Caco-2 (cell line): ENCODE measurements at regions of chr4 and their contacts with region 1.

Region 1: DNA sequence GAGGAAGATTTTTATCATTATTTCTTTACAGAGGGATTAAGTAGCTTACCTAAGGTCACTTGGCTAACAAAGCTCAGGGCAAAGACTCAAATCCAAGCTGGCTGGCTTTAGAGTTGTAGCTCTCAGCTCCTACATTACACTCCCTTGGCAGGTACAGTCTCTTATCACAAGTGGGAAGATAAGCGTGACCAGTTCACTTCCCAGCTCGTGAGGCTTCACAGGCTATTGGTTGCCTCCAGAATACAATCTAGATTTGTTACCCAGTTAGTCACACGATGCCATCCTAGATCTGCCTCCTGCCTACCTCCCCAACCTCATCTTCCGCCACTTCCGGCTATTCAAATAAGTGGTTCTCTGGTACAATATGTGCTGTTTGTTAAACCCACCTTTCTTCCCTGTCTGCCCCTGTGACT is 3.7 kb downstream of the MMRN1 start:
- DNase-seq: peak; percentile 63 to 76
- H3K4me3 ChIP-seq: no peak overlapping the region
- H3K4me3 Mint-ChIP-seq: no peak overlapping the region
- H3K27ac Mint-ChIP-seq: no peak overlapping the region
- H3K4me1 ChIP-seq: peaks cover 8% of the 10 kb centered on the region
- H3K4me1 Mint-ChIP-seq: no peaks in the 10 kb centered on the region
- H3K27me3 ChIP-seq: no peaks in the 10 kb centered on the region; the same call in none of the 2 replicates
- H3K27me3 Mint-ChIP-seq: no peaks in the 10 kb centered on the region
- CTCF ChIP-seq: no peak

Region 2: GRCh38 chr4:89226665-89227574 is 671.4 kb before region 1 on chr4:
- CTCF ChIA-PET with region 1: no interaction called
- POLR2A ChIA-PET with region 1: no interaction called
- intact Hi-C with region 1: loop called (anchors 2 kb)
- DNase-seq: peak; percentile 77 to 78
- H3K4me3 ChIP-seq: no peak overlapping the region
- H3K4me3 Mint-ChIP-seq: no peak overlapping the region
- H3K27ac Mint-ChIP-seq: no peak overlapping the region
- H3K4me1 ChIP-seq: peaks cover 7% of the 10 kb centered on the region; the same call in 1 of the 2 replicates
- H3K4me1 Mint-ChIP-seq: no peaks in the 10 kb centered on the region
- H3K27me3 ChIP-seq: no peaks in the 10 kb centered on the region
- H3K27me3 Mint-ChIP-seq: no peaks in the 10 kb centered on the region
- CTCF ChIP-seq: peak; percentile 43 to 70

Region 3: GRCh38 chr4:89482248-89482647 is 416.1 kb before region 1 on chr4:
- CTCF ChIA-PET with region 1: no interaction called
- POLR2A ChIA-PET with region 1: no interaction called
- intact Hi-C with region 1: loop called (anchors 2 kb)
- DNase-seq: peak; percentile 40 to 43
- H3K4me3 ChIP-seq: no peak overlapping the region
- H3K4me3 Mint-ChIP-seq: no peak overlapping the region
- H3K27ac Mint-ChIP-seq: no peak overlapping the region
- H3K4me1 ChIP-seq: no peaks in the 10 kb centered on the region
- H3K4me1 Mint-ChIP-seq: no peaks in the 10 kb centered on the region
- H3K27me3 ChIP-seq: no peaks in the 10 kb centered on the region
- H3K27me3 Mint-ChIP-seq: peaks cover 3% of the 10 kb centered on the region
- CTCF ChIP-seq: peak in 1 of 2 experiments; percentile 38

Region 4: GRCh38 chr4:89598602-89599001 is 299.7 kb before region 1 on chr4:
- CTCF ChIA-PET with region 1: no interaction called
- POLR2A ChIA-PET with region 1: no interaction called
- intact Hi-C with region 1: loop called (anchors 1 kb)
- DNase-seq: peak in 1 of 2 experiments; percentile 9
- H3K4me3 ChIP-seq: no peak overlapping the region
- H3K4me3 Mint-ChIP-seq: no peak overlapping the region
- H3K27ac Mint-ChIP-seq: no peak overlapping the region
- H3K4me1 ChIP-seq: no peaks in the 10 kb centered on the region
- H3K4me1 Mint-ChIP-seq: no peaks in the 10 kb centered on the region
- H3K27me3 ChIP-seq: no peaks in the 10 kb centered on the region
- H3K27me3 Mint-ChIP-seq: peaks cover 3% of the 10 kb centered on the region
- CTCF ChIP-seq: peak; percentile 40 to 45

Region 5: GRCh38 chr4:89657931-89658700 is 240.2 kb before region 1 on chr4:
- CTCF ChIA-PET with region 1: no interaction called
- POLR2A ChIA-PET with region 1: no interaction called
- intact Hi-C with region 1: loop called (anchors 1 kb)
- DNase-seq: peak in 1 of 2 experiments; percentile 19
- H3K4me3 ChIP-seq: no peak overlapping the region
- H3K4me3 Mint-ChIP-seq: no peak overlapping the region
- H3K27ac Mint-ChIP-seq: no peak overlapping the region
- H3K4me1 ChIP-seq: no peaks in the 10 kb centered on the region
- H3K4me1 Mint-ChIP-seq: peaks cover 9% of the 10 kb centered on the region
- H3K27me3 ChIP-seq: no peaks in the 10 kb centered on the region
- H3K27me3 Mint-ChIP-seq: no peaks in the 10 kb centered on the region
- CTCF ChIP-seq: peak; percentile 15 to 47

Region 6: DNA sequence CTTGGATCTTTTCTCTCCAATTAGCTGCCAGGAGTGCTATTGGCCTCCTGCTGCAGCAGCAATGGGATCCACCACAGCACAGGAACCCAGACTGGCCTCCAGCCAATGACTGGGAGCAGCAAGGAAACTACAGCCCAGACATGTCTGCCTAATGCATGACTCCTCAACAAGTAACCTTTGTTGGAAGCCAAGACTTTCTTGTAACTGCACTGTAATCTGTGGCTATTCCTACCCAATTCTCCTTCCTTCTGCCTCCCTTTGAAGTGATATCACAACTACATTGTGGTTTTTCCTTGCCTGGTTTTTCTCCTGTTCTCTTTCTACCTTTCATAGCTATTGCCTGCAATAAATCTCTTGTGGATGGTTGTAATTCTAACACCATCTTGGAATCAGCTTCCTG is 101.2 kb before region 1 on chr4:
- CTCF ChIA-PET with region 1: no interaction called
- POLR2A ChIA-PET with region 1: no interaction called
- intact Hi-C with region 1: no loop called
- DNase-seq: no peak
- H3K4me3 ChIP-seq: no peak overlapping the region
- H3K4me3 Mint-ChIP-seq: no peak overlapping the region
- H3K27ac Mint-ChIP-seq: no peak overlapping the region
- H3K4me1 ChIP-seq: peaks cover 7% of the 10 kb centered on the region; the same call in 1 of the 2 replicates
- H3K4me1 Mint-ChIP-seq: no peaks in the 10 kb centered on the region
- H3K27me3 ChIP-seq: no peaks in the 10 kb centered on the region
- H3K27me3 Mint-ChIP-seq: no peaks in the 10 kb centered on the region
- CTCF ChIP-seq: no peak